ENCODE measurements at regions of chr2 and their contacts with region 1.

Region 1: DNA sequence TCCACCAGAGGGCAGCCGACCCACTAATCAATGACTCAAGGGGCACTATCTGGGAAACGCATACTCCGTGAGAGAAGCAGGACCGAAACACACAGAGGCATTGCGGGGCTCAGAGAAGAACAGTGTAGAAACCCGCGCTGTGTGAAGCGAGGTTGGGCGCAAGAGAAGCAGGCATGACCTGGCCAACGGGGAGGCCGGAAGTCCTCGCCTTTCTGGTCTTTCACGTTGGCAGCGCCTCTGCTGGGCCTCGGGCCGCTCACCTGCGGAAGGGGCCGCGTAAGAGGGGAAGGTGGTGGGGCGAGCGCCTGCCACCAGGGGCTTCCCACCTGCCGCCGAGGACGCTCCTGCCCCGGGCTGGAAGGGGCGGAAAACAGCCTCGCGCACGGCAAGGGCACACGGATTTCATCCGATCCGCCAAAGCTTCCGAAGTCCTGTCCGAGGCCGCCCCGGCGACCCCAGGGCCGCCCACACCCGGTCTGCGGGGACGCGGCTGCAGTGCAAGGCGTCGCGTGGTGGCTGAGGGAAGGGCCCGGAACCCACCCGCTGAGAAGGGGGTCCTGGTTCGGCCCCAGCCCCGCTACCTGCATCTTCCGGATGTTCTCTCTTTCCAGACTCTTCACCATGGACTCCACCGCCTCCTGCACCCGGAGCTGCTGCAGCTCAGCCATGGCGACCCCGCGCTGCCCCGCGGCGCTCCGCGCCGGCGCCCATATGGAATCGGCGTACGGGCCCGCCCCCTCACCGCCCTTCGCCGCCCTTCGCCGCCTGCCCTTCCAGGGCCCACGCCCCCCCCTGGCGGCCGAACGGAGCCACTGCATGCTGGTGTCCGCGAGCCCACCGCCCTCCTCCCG is at the start of gene FAM136A:
- DNase-seq: peak; percentile 93
- CTCF ChIP-seq: peak; percentile 93

Region 2: DNA sequence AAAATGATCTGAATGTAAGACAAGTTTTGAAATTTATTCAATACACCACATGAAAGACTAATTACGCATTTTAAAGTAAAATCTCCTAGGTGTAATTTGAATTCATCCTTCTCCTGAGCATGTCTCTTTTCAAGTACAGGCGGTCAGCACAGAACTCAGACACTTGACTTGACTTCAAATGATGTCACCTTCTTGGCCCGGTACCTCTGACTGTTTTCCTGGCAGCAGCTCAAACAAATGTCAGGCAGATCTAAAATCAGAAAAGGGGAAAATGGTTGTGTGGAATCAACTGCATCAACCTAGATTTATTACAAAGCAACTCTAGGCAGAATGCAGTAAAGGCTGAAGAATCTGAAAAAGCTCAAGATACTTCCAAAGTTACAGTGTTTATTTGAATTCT is 1669.5 kb before region 1 on chr2:
- CTCF ChIA-PET with region 1: no interaction called
- POLR2A ChIA-PET with region 1: no interaction called
- DNase-seq: no peak
- CTCF ChIP-seq: no peak

Region 3: GRCh38 chr2:70283500-70284191 is 17.9 kb before region 1 on chr2:
- CTCF ChIA-PET with region 1: interaction called, 12 read pairs
- POLR2A ChIA-PET with region 1: no interaction called
- DNase-seq: no peak
- CTCF ChIP-seq: no peak

Region 4: GRCh38 chr2:70314640-70315039 is 13.1 kb after region 1 on chr2:
- CTCF ChIA-PET with region 1: interaction called, 21 read pairs
- POLR2A ChIA-PET with region 1: no interaction called
- DNase-seq: no peak
- CTCF ChIP-seq: no peak

Region 5: GRCh38 chr2:70321370-70321769 is 19.8 kb after region 1 on chr2:
- CTCF ChIA-PET with region 1: interaction called, 13 read pairs
- POLR2A ChIA-PET with region 1: no interaction called
- DNase-seq: no peak
- CTCF ChIP-seq: no peak

Region 6: GRCh38 chr2:70616168-70616694 is 314.7 kb after region 1 on chr2:
- CTCF ChIA-PET with region 1: interaction called, 80 read pairs
- POLR2A ChIA-PET with region 1: no interaction called
- DNase-seq: no peak
- CTCF ChIP-seq: no peak

Region 7: DNA sequence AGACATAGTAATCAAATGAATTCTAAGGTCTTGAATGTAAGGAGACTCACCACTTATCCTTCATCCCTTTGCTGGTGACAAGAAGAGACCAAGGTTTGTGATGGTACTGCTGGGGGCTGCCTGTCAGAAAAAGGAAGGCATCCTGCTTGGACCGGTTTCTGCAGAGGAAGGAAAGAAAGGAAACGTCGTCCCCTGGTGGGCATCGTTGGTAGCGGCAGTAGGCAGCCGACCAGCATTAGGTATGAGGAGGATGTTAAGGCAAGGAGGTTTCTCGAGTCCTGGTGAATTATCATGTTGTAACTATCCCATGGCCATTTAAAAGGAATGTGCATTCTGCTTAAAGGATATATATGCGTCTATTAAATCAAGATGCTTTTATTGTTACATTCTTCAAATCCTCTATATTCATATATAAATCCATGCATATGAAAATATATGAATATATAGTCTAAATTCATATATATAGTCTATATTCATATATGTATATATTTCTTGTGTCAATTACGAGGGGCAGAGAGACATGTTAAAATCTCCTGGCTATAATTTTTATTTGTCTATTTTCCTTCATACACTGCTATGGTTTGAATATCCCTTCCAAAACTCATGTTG is 346.4 kb after region 1 on chr2:
- CTCF ChIA-PET with region 1: interaction called, 36 read pairs
- POLR2A ChIA-PET with region 1: no interaction called
- DNase-seq: peak; percentile 54
- CTCF ChIP-seq: peak; percentile 81

Region 8: GRCh38 chr2:70919672-70920366 is 618.2 kb after region 1 on chr2:
- CTCF ChIA-PET with region 1: interaction called, 13 read pairs
- POLR2A ChIA-PET with region 1: no interaction called
- DNase-seq: peak; percentile 78
- CTCF ChIP-seq: peak; percentile 87